ENCODE measurements at regions of chr22 and their contacts with region 1.

Region 1: DNA sequence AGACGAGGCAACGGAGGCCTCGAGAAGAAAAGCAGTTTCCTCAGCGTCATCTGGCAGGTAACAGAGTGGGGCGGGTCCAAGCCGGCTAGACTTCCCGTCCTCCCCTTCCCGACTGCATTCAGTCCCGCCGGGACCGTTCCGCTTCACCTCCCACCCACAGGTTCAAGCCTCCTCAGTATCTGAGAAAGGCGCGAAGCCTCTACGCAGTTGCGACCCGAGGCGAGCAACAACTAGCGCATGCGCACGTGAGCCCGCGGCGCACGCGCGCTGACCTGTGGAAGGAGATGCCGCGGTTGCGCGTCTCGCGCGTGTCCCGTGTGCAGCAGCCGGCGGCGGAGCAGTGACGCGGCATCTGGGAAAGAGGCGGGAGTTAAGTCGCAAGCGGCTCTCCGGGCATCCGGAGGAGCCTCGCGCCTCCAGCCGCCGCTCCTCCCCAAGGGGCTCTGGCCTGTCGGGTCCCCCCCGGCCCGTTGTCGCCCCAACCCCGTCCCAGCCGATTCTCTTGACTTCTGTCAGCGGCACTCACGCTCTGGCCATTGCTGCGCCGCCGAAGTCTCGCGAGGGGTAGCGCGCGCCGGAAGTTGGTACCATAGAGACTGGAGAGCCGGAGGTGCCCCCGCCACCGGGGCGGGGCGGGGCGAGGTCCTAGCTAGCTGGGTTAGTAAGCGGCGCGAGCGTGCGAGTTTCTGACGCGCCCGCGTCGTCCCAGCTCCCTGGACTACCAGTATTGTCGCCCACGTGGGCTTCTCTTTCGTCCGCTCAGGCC is at the start of gene THAP7:
- DNase-seq: peak; percentile 96 to 99
- ATAC-seq: peak; percentile 88 to 96 (median 90)
- H3K4me3 ChIP-seq: peak within 1 kb of the TSS; percentile 87
- H3K4me3 Mint-ChIP-seq: peak within 1 kb of the TSS; percentile 93
- H3K27ac ChIP-seq: peak within 1 kb of the TSS; percentile 94
- H3K27ac Mint-ChIP-seq: peak within 1 kb of the TSS; percentile 98 to 99
- H3K4me1 ChIP-seq: peaks cover 35% of the 10 kb centered on the region
- H3K4me1 Mint-ChIP-seq: peaks cover 26 to 33% of the 10 kb centered on the region in 2 donors
- H3K27me3 ChIP-seq: no peaks in the 10 kb centered on the region
- H3K27me3 Mint-ChIP-seq: no peaks in the 10 kb centered on the region
- CTCF ChIP-seq: no peak
- total RNA-seq, gene THAP7: 24.1 to 40.0 (median 26.8) TPM

Region 2: GRCh38 chr22:20725987-20726558 is 275.7 kb before region 1 on chr22:
- intact Hi-C with region 1: no loop called
- DNase-seq: no peak
- ATAC-seq: no peak
- H3K4me3 ChIP-seq: no peak overlapping the region
- H3K4me3 Mint-ChIP-seq: no peak overlapping the region
- H3K27ac ChIP-seq: no peak overlapping the region
- H3K27ac Mint-ChIP-seq: no peak overlapping the region
- H3K4me1 ChIP-seq: no peaks in the 10 kb centered on the region
- H3K4me1 Mint-ChIP-seq: no peaks in the 10 kb centered on the region
- H3K27me3 ChIP-seq: no peaks in the 10 kb centered on the region
- H3K27me3 Mint-ChIP-seq: no peaks in the 10 kb centered on the region
- CTCF ChIP-seq: no peak

Region 3: GRCh38 chr22:21014202-21014725 is 12.5 kb after region 1 on chr22:
- intact Hi-C with region 1: loop called (anchors 1 kb)
- DNase-seq: peak; percentile 90 to 93
- ATAC-seq: peak; percentile 93 to 94 (median 94)
- H3K4me3 ChIP-seq: peak overlapping the region; percentile 49
- H3K4me3 Mint-ChIP-seq: peak overlapping the region; percentile 95
- H3K27ac ChIP-seq: peak overlapping the region; percentile 90
- H3K27ac Mint-ChIP-seq: peak overlapping the region; percentile 95 to 97
- H3K4me1 ChIP-seq: peaks cover 29% of the 10 kb centered on the region
- H3K4me1 Mint-ChIP-seq: peaks cover 16 to 31% of the 10 kb centered on the region in 2 donors
- H3K27me3 ChIP-seq: no peaks in the 10 kb centered on the region
- H3K27me3 Mint-ChIP-seq: no peaks in the 10 kb centered on the region
- CTCF ChIP-seq: no peak

Region 4: DNA sequence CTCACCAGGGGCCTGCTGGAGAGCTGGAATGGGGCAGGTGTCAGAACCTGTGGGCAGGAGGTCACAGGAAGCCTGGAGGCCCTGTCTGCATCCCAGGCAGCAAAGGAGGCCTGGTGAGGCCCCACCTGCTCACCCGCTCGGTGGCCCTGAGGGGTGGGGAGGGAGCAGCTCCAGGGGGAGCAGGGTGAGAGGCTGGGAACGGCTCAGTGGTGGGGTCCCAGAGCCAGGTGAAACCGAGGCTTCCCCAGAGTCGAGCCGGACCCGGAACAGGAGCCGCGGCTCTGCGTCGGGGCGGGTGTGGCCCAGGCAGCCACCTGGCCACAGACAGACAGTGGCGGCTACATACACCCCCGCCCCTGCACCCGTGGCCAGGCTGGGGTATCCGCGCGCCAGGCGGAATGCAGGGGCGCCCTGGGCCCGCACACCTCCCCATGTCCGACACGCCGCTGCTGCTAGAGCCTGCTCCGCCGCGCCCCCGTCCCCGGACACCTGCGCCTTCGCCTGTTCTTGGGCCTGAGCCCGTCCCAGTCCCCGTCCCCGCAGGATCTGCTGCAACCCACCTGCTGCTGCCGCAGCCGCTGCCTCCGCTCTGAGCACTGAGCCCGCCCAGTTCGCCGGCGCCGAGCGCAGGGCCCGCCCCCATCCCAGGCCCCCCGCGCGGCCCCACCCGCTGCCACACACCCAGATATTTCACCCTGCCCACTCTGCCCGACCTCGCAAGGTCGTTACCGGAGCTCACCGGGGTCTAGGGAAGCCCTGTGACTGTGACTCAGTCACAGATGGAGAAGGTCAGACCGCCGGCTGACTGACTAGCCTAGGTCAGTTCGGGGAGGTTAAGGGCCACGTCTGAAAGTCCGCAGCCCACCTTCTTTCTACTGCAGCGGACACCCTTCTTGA is 30.5 kb after region 1 on chr22 and contains the start of gene SLC7A4:
- intact Hi-C with region 1: no loop called
- DNase-seq: no peak
- ATAC-seq: peak in 1 of 3 donors; percentile 50
- H3K4me3 ChIP-seq: no peak within 1 kb of the TSS
- H3K4me3 Mint-ChIP-seq: no peak within 1 kb of the TSS
- H3K27ac ChIP-seq: no peak within 1 kb of the TSS
- H3K27ac Mint-ChIP-seq: no peak within 1 kb of the TSS
- H3K4me1 ChIP-seq: peaks cover 9% of the 10 kb centered on the region
- H3K4me1 Mint-ChIP-seq: peaks cover 0 to 4% of the 10 kb centered on the region in 2 donors
- H3K27me3 ChIP-seq: peaks cover 6% of the 10 kb centered on the region
- H3K27me3 Mint-ChIP-seq: peaks cover 10 to 26% of the 10 kb centered on the region in 2 donors
- CTCF ChIP-seq: no peak
- total RNA-seq, gene SLC7A4: not detected